ENCODE measurements at regions of chr15 and their contacts with region 1.

Region 1: GRCh38 chr15:79989682-79990081 is 18.7 kb upstream of the BCL2A1 start:
- DNase-seq: no peak
- H3K4me3 Mint-ChIP-seq: no peak overlapping the region
- H3K27ac Mint-ChIP-seq: no peak overlapping the region
- H3K4me1 Mint-ChIP-seq: peaks cover 13% of the 10 kb centered on the region
- H3K27me3 Mint-ChIP-seq: no peaks in the 10 kb centered on the region

Region 2: GRCh38 chr15:79339564-79340314 is 649.9 kb before region 1 on chr15:
- CTCF ChIA-PET with region 1: no interaction called
- intact Hi-C with region 1: loop called (anchors 10 kb)
- DNase-seq: no peak
- H3K4me3 Mint-ChIP-seq: no peak overlapping the region
- H3K27ac Mint-ChIP-seq: no peak overlapping the region
- H3K4me1 Mint-ChIP-seq: no peaks in the 10 kb centered on the region
- H3K27me3 Mint-ChIP-seq: no peaks in the 10 kb centered on the region

Region 3: GRCh38 chr15:79682285-79682684 is 307.4 kb before region 1 on chr15:
- CTCF ChIA-PET with region 1: no interaction called
- intact Hi-C with region 1: no loop called
- DNase-seq: no peak
- H3K4me3 Mint-ChIP-seq: no peak overlapping the region
- H3K27ac Mint-ChIP-seq: no peak overlapping the region
- H3K4me1 Mint-ChIP-seq: peaks cover 7% of the 10 kb centered on the region
- H3K27me3 Mint-ChIP-seq: peaks cover 20% of the 10 kb centered on the region

Region 4: GRCh38 chr15:79769069-79769481 is 220.6 kb before region 1 on chr15:
- CTCF ChIA-PET with region 1: interaction called, 3 read pairs
- intact Hi-C with region 1: loop called (anchors 1 kb)
- DNase-seq: peak; percentile 22
- H3K4me3 Mint-ChIP-seq: no peak overlapping the region
- H3K27ac Mint-ChIP-seq: no peak overlapping the region
- H3K4me1 Mint-ChIP-seq: no peaks in the 10 kb centered on the region
- H3K27me3 Mint-ChIP-seq: peaks cover 10% of the 10 kb centered on the region

Region 5: DNA sequence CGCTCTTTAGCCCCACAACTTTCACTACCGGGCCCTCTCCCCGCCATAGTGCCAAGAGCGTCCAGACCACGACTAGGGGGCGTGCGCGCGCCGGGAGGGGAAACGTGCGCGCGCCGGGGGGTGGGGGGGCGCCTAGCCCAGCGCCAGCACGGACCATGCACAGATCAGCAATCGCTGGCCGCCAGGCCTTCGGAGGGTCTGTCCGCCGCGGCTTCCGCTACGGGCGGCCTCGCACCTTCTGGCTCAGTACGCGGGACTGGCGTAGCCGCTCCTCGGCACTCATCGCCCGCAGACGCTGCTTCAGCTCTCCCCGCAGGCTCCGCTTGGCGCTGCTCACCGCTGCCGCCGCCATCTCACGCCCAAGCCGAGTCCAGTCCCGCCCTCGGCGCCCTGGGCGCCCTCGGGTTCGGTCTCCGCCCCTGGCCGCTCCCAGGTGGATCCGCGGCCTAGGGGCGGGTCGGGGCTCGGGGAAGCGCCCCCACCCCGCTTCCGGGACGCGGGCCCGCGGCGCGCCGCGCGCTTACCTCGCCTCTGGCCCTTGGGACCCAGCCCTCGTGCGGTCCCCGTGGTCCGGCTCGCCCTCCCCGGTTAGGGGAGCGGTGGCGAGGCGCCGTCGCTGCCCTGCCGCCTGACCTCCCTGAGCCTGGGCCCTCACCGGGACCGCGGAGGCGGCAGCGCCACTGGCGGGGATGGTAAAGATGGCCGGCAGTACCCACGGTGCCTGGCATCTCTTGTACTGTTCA is 92.9 kb before region 1 on chr15 and contains the start of gene MTHFS:
- CTCF ChIA-PET with region 1: interaction called, 15 read pairs
- intact Hi-C with region 1: loop called (anchors 1 kb)
- DNase-seq: peak; percentile 76
- H3K4me3 Mint-ChIP-seq: peak within 1 kb of the TSS; percentile 100
- H3K27ac Mint-ChIP-seq: peak within 1 kb of the TSS; percentile 100
- H3K4me1 Mint-ChIP-seq: peaks cover 42% of the 10 kb centered on the region
- H3K27me3 Mint-ChIP-seq: no peaks in the 10 kb centered on the region
- total RNA-seq, gene MTHFS: 44.8 to 47.0 TPM

Region 6: DNA sequence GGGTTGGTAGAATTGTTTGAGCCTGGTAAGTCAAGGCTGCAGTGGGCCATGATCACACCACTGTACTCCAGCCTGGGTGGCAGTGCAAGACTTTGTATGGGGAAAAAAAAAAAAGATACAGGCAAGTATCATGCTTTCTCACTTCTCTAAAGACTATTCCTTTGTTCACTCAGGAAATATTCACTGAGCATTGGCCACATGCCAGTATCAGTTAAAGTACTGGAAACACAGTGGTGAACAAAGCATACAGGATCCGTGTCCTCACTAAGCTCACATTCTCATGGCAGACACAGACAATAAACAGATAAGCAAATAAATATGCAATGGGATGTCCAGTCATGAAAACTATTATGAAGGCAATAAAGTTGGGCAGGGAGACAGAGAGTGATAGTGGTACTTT is 87.7 kb before region 1 on chr15:
- CTCF ChIA-PET with region 1: interaction called, 9 read pairs
- intact Hi-C with region 1: loop called (anchors 1 kb)
- DNase-seq: no peak
- H3K4me3 Mint-ChIP-seq: no peak overlapping the region
- H3K27ac Mint-ChIP-seq: no peak overlapping the region
- H3K4me1 Mint-ChIP-seq: peaks cover 40% of the 10 kb centered on the region
- H3K27me3 Mint-ChIP-seq: no peaks in the 10 kb centered on the region

Region 7: DNA sequence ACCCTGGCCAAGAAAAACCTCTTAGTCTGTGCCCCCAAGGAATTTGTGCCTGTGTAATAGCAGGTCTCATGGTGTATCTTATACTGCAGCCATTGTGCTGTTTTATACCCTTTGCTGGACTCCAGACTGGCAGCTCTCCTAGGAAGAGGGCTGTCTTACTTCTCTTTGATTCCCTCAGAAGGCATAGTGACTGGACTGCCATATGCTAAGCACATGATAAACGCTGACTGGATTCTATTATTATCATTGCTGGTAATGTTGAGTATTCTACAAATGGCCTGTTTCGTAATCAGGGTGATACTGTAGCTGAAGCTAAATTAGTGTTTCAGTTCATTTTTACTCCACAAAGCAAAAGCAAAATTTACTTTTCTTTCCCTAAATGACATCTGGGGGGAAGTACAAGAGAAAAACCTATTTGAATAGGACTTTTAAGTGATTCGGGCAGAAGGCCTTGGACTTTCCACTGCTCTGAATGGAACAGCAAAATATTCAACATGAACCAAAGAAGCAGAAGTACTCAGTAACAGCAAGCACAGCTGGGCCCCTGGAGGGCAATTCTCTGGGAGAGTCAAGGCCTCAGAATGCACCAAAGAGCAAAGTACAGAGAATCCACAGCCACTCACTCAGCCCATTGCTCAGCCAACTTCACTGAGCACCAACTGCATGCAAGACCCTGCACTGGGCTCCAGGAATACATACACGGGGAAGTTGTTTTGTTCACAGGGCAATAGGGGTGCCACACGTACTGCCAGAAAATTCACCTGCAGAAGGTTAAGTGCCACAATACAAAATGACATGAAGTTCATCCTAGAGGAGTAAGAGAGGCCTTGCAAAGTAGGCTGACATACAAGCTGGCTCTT is 10.8 kb before region 1 on chr15:
- CTCF ChIA-PET with region 1: interaction called, 17 read pairs
- intact Hi-C with region 1: no loop called
- DNase-seq: peak; percentile 69
- H3K4me3 Mint-ChIP-seq: peak overlapping the region; percentile 41
- H3K27ac Mint-ChIP-seq: peak overlapping the region; percentile 91
- H3K4me1 Mint-ChIP-seq: peaks cover 49% of the 10 kb centered on the region
- H3K27me3 Mint-ChIP-seq: no peaks in the 10 kb centered on the region

Region 8: DNA sequence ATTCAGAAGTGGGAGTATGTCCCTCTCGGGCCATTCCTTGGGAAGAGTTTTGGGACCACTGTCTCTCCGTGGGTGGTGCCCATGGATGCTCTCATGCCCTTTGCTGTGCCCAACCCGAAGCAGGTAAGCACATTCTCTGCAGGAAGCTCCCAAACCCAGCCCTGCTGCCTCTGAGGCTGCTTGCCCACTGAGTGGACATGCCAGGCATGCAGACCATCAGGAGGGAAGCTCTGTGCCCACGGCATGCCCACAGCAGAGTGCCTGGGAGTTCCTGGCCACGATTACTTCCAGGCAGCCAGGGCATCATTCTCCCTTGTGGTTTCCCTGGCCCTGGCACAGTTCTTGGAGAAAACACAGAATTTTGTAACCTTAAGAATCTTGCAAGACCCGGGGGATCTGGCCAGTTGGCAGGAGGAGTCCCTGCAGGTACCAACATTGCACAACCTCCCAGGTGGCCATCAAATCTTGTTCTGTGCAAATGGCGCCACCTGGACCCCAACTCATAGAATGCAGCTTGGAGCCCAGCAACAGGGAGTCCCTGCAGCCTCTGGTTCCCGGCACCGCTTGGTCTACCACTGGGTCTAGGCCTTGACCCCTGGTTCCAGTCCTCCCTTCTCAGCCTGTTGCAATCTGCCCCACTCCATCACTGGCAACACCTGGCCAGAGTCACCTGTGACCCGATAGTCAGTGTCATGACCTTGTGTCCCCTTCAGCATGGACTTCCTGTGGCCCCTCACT is 183.5 kb after region 1 on chr15:
- CTCF ChIA-PET with region 1: interaction called, 20 read pairs
- intact Hi-C with region 1: no loop called
- DNase-seq: peak; percentile 89
- H3K4me3 Mint-ChIP-seq: no peak overlapping the region
- H3K27ac Mint-ChIP-seq: no peak overlapping the region
- H3K4me1 Mint-ChIP-seq: no peaks in the 10 kb centered on the region
- H3K27me3 Mint-ChIP-seq: no peaks in the 10 kb centered on the region